ENCODE measurements at regions of chr6 and their contacts with region 1.

Region 1: DNA sequence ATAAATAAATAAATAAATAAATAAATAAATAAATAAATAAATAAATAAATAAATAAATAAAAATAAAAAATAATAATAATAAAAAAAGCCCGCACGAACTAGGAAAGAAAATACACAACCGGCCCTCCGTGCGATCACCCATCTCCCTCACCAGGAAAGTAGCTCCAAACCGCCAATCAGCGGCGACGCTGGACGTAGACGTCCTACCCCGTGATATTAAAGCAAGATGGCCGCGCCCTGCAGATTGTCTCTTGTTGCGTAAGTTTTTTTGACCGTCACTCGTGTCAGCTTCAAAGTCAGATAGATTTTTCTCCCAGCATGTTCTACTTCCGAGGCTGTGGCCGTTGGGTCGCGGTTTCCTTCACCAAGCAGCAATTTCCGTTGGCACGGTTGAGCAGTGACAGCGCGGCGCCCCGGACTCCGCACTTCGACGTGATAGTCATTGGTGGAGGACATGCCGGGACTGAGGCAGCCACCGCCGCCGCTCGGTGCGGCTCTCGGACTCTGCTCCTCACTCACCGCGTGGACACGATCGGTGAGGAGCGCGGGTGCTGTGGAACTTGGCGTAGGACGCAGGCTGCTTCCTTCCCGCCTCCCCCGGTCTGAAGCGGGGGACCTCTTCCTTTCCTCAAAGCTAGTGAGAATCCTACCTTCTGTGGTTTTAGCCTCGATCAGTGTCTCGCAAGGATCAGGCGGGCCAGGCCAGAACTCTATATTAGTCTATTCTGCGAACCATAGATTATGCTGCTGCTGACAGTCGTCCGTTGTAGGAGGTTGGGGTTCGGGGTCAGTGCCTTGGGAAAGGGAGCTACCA is at the start of gene MTO1:
- DNase-seq: peak; percentile 89 to 96 (median 95)
- H3K4me3 ChIP-seq: peak within 1 kb of the TSS; percentile 88 to 98 (median 95)
- H3K27ac ChIP-seq: peak within 1 kb of the TSS; percentile 90 to 98
- H3K4me1 ChIP-seq: peaks cover 2 to 32% (median 13%) of the 10 kb centered on the region in 4 experiments
- H3K27me3 ChIP-seq: no peaks in the 10 kb centered on the region

Region 2: GRCh38 chr6:73451223-73452107 is 10.3 kb before region 1 on chr6:
- CTCF ChIA-PET with region 1: interaction called, 6 read pairs
- POLR2A ChIA-PET with region 1: interaction called, 31 read pairs
- DNase-seq: peak; percentile 60 to 83 (median 73)
- H3K4me3 ChIP-seq: peak overlapping the region; percentile 66 to 95 (median 78)
- H3K27ac ChIP-seq: peak overlapping the region; percentile 46 to 74
- H3K4me1 ChIP-seq: peaks cover 10 to 31% (median 26%) of the 10 kb centered on the region in 4 experiments
- H3K27me3 ChIP-seq: no peaks in the 10 kb centered on the region

Region 3: GRCh38 chr6:73471686-73472290 is 10.0 kb after region 1 on chr6:
- CTCF ChIA-PET with region 1: interaction called, 5 read pairs
- POLR2A ChIA-PET with region 1: interaction called, 10 read pairs
- DNase-seq: no peak
- H3K4me3 ChIP-seq: no peak overlapping the region
- H3K27ac ChIP-seq: no peak overlapping the region
- H3K4me1 ChIP-seq: no peaks in the 10 kb centered on the region
- H3K27me3 ChIP-seq: no peaks in the 10 kb centered on the region

Region 4: GRCh38 chr6:73888050-73888449 is 426.3 kb after region 1 on chr6:
- CTCF ChIA-PET with region 1: no interaction called
- POLR2A ChIA-PET with region 1: no interaction called
- DNase-seq: peak in 2 of 3 donors; percentile 28 to 68
- H3K4me3 ChIP-seq: no peak overlapping the region
- H3K27ac ChIP-seq: no peak overlapping the region
- H3K4me1 ChIP-seq: peaks cover 0 to 9% (median 4%) of the 10 kb centered on the region in 4 experiments
- H3K27me3 ChIP-seq: no peaks in the 10 kb centered on the region

Measured in common myeloid progenitor, CD34-positive (primary cell).